Lower leg skin (tissue), 4 donors: ENCODE measurements at regions of chr12 and their contacts with region 1.

Region 1: DNA sequence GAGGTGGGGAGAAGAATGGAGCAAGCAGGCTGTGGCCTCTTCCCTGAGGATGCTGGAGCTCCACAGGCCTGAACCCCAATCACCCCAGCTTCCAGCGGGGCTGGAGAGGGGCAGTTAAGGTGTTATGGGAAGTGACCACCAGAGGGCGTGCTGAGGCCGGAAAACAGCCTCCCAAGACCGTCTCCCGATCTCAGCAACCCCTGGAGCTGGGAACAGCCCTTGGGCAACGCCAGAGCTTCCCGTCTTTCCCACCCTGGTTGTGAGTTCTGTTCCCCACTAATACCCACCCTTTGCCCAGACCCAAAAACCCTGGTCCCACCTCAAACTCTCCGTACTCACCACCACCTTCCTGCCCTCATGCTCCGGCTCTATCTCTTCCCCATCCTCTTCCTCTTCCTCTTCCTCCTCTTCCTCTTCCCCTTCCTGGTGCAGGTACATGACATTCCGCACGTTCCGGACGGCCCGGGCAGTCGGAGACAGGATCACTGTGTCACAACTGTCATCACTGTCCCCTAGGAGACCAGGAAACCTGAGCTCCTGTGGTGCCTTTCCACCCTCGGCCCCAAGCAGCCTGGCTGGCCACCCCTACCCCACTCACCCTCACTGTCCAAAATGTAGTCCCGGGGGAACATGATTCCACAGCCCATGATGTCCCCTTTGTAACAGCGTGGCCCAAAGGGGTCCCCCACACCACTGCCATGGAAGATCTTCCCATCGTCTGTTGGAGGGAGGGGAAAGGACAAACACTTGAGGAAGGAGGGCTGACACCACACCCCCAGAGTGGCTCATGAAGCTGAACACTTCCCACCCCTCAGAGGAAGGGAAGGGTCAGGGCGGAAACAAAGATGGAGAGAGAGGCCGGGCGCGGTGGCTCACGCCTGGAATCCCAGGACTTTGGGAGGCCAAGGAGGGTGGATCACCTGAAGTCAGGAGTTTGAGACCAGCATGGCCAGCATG is 12.9 kb downstream of the SPRYD3 start:
- DNase-seq: peak; percentile 78 to 96
- H3K4me3 ChIP-seq: no peak overlapping the region
- CTCF ChIP-seq: peak in 1 of 3 donors; percentile 90
- POLR2A ChIP-seq: no peak

Region 2: GRCh38 chr12:53039851-53040250 is 26.4 kb before region 1 on chr12:
- intact Hi-C with region 1: loop called (anchors 1 kb)
- DNase-seq: no peak
- H3K4me3 ChIP-seq: no peak overlapping the region
- CTCF ChIP-seq: no peak
- POLR2A ChIP-seq: no peak

Region 3: GRCh38 chr12:53190108-53190729 is 124.0 kb after region 1 on chr12:
- intact Hi-C with region 1: loop called (anchors 10 kb)
- DNase-seq: peak in 1 of 2 donors; percentile 86
- H3K4me3 ChIP-seq: no peak overlapping the region
- CTCF ChIP-seq: no peak
- POLR2A ChIP-seq: no peak